ENCODE measurements at regions of chr2 and their contacts with region 1.

Region 1: DNA sequence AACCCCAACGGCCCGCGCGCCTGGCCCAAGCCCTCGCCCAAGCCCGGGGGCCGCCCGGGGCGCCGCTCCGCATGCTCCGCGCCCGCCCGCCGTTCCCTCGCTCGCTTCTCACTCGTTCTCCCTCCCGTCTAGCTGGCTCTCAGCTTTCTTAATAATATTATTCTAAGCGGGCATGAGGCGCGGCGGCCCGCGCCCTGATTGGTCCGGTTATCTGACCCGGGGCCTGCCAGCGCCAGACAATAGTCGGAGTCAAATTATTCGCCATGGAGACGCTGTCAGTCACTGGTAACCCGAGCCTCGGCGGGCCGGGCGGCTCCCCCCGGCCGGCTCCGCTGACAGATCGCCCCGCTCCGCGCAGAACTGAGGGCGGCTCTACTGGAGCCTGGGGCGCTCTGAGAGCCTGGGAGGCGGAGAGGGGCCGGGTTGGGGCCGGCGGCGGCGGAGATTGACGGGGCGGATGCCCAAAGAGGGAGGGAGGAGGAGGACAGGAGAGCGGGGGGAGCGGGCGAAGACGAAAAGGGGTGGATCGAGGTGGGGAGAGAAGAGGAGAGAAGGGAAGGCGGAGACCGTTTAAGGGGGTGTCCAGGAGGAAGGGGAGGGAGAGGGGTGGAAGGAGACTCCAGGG is at the start of gene SIX2:
- DNase-seq: no peak
- ATAC-seq: peak; percentile 21
- H3K4me3 Mint-ChIP-seq: peak within 1 kb of the TSS; percentile 83
- H3K27ac Mint-ChIP-seq: no peak within 1 kb of the TSS
- H3K4me1 Mint-ChIP-seq: peaks cover 57% of the 10 kb centered on the region
- H3K27me3 Mint-ChIP-seq: peaks cover 64% of the 10 kb centered on the region
- CTCF ChIP-seq: no peak
- total RNA-seq, gene SIX2: not detected in 2 replicates

Region 2: DNA sequence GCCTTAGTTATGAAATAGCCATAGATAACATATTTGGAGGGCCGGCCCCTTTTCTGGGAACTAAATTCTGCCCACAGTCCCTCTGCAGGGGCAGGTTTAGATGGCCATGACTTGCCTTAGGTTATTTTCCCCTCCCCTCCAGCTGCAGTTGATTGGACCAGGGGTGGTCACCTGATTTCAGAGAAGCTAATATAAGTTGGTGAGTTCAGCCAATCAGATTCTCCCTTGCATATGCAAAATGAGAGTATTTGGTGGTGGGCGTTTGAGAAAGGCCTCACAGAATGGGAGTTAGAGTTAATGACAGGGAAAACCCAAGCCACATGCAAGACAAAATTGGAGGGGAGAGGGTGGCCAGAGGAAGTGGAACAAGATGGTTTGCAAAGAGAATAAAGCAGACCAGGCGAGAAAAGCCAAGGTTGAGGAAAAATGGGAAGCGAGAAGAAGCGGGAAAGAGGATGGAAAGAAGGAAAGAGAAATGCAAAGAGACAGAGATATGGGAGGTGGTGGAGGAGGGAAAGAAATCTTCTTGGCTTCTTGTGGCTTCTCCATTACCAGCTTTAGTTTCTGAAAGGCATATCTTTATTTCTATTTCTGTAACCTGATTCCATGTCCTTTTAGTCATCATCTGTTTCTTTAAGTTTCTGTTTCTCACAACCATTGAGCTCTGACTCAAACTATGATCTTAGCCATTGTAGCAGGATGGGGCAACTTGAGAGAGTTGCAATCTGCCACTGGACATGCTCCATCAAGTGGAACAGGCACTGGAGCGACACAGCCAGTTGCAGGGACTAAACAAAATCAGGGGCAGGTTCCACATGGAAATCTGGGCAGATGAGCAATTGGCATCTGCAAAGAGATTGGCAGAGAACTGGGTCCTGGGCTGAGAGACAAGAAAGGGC is 176.0 kb before region 1 on chr2:
- CTCF ChIA-PET with region 1: no interaction called
- POLR2A ChIA-PET with region 1: no interaction called
- intact Hi-C with region 1: no loop called
- DNase-seq: no peak
- ATAC-seq: no peak
- H3K4me3 Mint-ChIP-seq: no peak overlapping the region
- H3K27ac Mint-ChIP-seq: no peak overlapping the region
- H3K4me1 Mint-ChIP-seq: no peaks in the 10 kb centered on the region
- H3K27me3 Mint-ChIP-seq: peaks cover 7% of the 10 kb centered on the region
- CTCF ChIP-seq: no peak

Region 3: GRCh38 chr2:44941551-44942234 is 67.7 kb before region 1 on chr2 and contains the start of gene SIX3:
- CTCF ChIA-PET with region 1: no interaction called
- POLR2A ChIA-PET with region 1: no interaction called
- intact Hi-C with region 1: loop called (anchors 5 kb)
- DNase-seq: no peak
- ATAC-seq: peak; percentile 69
- H3K4me3 Mint-ChIP-seq: peak within 1 kb of the TSS; percentile 85
- H3K27ac Mint-ChIP-seq: peak within 1 kb of the TSS; percentile 46
- H3K4me1 Mint-ChIP-seq: peaks cover 63% of the 10 kb centered on the region
- H3K27me3 Mint-ChIP-seq: peaks cover 71% of the 10 kb centered on the region
- CTCF ChIP-seq: no peak
- total RNA-seq, gene SIX3: not detected in 2 replicates

Region 4: DNA sequence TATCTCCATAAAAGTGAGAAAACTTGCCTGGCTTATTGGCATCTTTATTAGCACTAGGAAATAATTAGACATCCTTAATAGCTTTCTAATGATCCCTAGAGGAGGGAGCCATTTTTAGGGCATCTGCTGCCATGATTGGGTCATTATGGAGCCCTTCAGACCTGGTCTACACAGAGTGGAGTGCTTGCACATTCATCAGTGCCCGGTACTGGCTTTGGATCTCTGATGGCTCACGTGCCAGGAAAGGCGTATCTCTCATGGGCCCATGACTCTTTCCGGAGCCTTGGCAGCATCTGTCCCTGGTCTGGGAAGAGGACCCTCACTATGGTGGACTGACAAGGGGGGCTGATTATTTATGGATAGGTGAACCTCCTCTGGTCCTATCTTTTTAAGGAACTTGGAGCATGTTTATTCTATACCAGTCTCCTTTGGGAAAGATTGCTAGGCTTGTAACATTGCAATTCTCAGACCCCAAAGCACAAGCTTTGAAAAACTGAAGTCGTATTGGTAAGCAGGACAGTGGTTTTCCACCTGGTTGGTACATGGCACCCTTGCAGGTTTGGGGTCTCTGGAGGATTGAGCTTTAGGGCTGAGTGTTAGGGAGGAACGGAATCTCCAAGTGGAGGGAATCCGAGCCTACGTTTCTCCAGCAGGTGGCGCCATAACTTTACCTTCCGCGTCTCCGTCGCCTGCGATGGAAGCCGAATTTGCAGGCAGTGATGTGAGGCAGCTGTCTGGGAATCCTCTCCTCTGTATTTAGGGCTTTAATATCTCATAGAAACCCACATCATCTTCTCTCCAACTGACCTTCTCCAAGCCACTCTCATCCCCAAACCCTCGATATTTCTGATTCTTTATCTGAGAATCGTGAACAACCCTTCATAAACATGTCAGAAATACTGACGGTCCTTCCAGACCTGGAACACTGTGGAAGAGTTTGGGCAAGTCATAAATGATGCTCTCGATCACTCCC is 28.0 kb before region 1 on chr2:
- CTCF ChIA-PET with region 1: no interaction called
- POLR2A ChIA-PET with region 1: no interaction called
- intact Hi-C with region 1: no loop called
- DNase-seq: peak; percentile 50
- ATAC-seq: no peak
- H3K4me3 Mint-ChIP-seq: no peak overlapping the region
- H3K27ac Mint-ChIP-seq: no peak overlapping the region
- H3K4me1 Mint-ChIP-seq: peaks cover 2% of the 10 kb centered on the region
- H3K27me3 Mint-ChIP-seq: peaks cover 8% of the 10 kb centered on the region
- CTCF ChIP-seq: peak; percentile 37

Region 5: DNA sequence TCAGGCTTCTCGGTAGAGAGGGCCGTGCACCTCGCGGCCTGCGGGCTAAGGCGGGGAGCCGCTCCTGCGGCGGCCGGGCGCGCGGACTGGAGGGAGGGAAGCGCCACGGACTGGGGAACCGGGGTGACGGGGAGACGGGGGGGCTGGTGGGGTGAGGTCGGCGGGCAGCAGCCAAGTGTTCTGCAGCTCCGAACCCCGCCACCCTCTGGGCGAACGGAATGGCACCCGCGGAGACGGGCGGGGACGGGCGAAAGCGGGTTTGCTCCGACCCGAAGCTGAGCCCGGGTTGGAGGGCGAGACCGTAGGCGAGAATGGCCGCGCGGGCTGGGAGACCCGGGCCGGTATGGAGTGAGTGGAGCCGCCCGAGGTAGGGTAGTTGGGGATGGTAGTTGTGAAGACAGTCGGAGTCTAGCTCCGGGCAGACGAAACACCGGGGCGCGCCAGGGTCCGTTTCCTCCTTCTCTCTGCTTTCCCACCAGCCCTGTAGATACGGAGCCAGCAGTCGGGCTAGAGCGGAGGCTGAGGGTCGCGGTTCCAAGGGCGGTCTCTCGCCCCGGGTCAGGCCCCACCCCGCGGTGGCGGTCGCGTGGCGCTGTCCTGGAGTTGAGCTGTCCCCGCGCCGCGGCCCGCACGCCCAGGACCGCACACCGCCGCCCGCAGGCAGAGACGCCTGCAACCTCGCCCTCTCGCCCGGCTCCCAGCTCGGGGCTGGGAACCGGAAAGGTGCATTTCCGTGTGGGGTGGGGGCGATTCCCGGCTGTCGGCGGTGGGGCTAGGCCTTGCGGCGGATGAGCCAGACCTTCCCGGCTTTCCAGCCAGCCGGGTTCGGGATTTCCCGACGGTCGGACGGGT is 160.2 kb after region 1 on chr2:
- CTCF ChIA-PET with region 1: no interaction called
- POLR2A ChIA-PET with region 1: no interaction called
- intact Hi-C with region 1: loop called (anchors 10 kb)
- DNase-seq: no peak
- ATAC-seq: no peak
- H3K4me3 Mint-ChIP-seq: peak overlapping the region; percentile 63
- H3K27ac Mint-ChIP-seq: no peak overlapping the region
- H3K4me1 Mint-ChIP-seq: peaks cover 12% of the 10 kb centered on the region
- H3K27me3 Mint-ChIP-seq: peaks cover 57% of the 10 kb centered on the region
- CTCF ChIP-seq: no peak